ENCODE measurements at regions of chr12 and their contacts with region 1.

Region 1: DNA sequence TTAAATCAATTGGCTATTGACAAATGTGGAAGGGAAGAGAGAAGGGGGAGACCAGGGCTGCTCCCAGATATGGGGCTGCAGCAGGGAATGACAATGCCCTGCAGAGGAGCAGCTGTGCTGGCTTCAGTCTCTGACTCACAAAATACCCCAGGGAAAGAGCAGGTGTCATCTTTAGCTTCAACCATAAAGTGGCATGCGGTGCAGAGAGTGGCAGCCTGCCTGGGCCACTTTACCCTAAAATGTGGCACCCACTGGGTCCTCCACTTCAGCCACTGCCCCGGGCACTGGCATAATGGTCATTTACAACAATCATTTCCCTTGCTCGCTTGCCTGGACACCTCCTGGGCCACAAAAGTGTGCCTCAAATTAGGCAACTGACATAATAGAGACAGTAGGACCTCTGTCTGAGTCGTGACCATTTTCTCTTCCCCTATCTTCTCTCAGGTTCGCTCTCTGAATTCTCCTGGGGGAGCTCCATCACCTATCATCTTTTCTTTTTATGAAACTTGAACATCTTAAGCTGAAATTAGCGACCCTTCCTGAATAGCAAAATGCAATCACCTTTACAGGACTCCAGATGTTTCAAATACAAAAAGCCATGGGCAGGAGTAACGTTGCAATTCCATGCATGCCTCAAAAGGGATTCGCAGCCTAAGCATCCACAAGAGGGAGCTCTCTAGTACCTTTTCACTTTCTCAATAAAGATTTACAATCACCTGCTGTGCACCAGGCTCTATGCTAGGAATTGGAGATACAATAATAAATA is 179.9 kb upstream of the ATF7IP start:
- DNase-seq: no peak
- ATAC-seq: peak; percentile 91
- H3K4me3 ChIP-seq: no peak overlapping the region
- H3K27ac ChIP-seq: no peak overlapping the region
- H3K4me1 ChIP-seq: peaks cover 4% of the 10 kb centered on the region; the same call in 1 of the 2 replicates
- H3K27me3 ChIP-seq: no peaks in the 10 kb centered on the region
- CTCF ChIP-seq: peak; percentile 65 to 85 (median 68)
- EP300 ChIP-seq: no peak
- POLR2A ChIP-seq: no peak
- RAD21 ChIP-seq: peak; percentile 67

Region 2: GRCh38 chr12:14175206-14175605 is 10.4 kb before region 1 on chr12:
- CTCF ChIA-PET with region 1: interaction called, 45 read pairs
- POLR2A ChIA-PET with region 1: no interaction called
- RAD21 ChIA-PET with region 1: interaction called, 6 read pairs
- SMC1A ChIA-PET with region 1: interaction called, 26 read pairs
- in situ Hi-C with region 1: no loop called
- intact Hi-C with region 1: no loop called
- DNase-seq: no peak
- ATAC-seq: no peak
- H3K4me3 ChIP-seq: no peak overlapping the region
- H3K27ac ChIP-seq: no peak overlapping the region
- H3K4me1 ChIP-seq: peaks cover 5% of the 10 kb centered on the region
- H3K27me3 ChIP-seq: no peaks in the 10 kb centered on the region
- CTCF ChIP-seq: no peak
- EP300 ChIP-seq: no peak
- POLR2A ChIP-seq: no peak
- RAD21 ChIP-seq: no peak

Measured in GM12878 (cell line).